WTC11 (cell line): ENCODE measurements at regions of chr7 and their contacts with region 1.

Region 1: DNA sequence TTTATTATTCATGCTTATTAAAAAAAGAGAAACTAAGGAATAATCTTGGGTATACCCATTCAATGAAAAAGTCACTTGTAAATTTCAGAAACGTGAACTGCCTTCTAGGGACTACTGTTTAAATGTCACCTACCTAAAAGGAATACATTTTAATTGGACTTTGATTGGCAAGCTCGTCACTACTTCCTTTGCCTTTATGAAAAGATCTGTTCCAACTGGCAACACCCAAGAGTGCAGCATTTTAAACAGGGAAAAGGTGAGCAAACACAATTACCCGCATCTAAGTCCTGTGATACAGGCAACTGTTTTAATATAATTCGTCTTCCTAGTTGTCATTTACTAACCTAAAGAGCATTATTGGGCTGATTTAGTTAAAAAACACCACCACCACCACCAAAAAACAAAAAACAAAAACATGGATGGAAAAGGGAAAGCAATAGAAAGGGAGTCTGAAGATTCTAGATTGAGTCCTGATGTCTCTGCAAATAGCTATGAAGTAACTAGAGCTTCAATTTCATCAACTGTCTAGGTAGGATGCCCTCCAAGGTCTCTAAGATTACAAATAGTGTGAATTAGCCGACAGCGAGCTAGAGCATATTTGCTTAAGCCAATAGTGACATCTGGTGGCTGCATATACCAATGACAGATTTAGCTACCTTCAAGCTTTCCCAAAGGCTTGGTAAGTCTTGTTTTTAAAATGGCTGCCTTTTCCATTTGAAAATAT is 33.8 kb upstream of the ICA1 start:
- DNase-seq: no peak
- ATAC-seq: peak; percentile 96
- H3K4me3 Mint-ChIP-seq: no peak overlapping the region
- H3K27ac Mint-ChIP-seq: no peak overlapping the region
- H3K4me1 Mint-ChIP-seq: peaks cover 31% of the 10 kb centered on the region
- H3K27me3 Mint-ChIP-seq: no peaks in the 10 kb centered on the region; the same call in 1 of the 2 replicates
- CTCF ChIP-seq: peak; percentile 70

Region 2: GRCh38 chr7:8214244-8214824 is 81.5 kb before region 1 on chr7:
- CTCF ChIA-PET with region 1: interaction called, 11 read pairs
- POLR2A ChIA-PET with region 1: no interaction called
- DNase-seq: no peak
- ATAC-seq: no peak
- H3K4me3 Mint-ChIP-seq: no peak overlapping the region
- H3K27ac Mint-ChIP-seq: no peak overlapping the region
- H3K4me1 Mint-ChIP-seq: peaks cover 57% of the 10 kb centered on the region
- H3K27me3 Mint-ChIP-seq: no peaks in the 10 kb centered on the region
- CTCF ChIP-seq: no peak

Region 3: DNA sequence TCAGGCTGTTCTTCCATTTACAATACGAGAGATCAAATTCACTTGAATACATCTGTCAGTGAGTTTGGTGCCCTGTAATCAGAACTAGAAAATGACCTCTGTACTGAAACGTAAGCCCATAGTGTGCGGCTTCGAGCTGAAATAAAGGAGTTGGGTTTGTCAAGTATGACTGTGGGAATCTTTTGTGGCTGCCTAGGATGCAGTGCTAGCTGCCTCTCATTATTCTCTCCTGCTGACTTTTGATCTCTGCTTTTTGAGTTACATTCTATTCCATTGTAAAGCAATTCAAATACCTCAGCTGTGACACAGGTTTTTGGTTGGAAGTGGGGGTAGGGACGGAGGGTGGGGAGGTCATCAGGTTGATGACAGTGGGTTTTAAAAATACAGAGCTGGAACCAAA is 74.2 kb before region 1 on chr7:
- CTCF ChIA-PET with region 1: interaction called, 11 read pairs
- POLR2A ChIA-PET with region 1: no interaction called
- DNase-seq: no peak
- ATAC-seq: peak; percentile 80
- H3K4me3 Mint-ChIP-seq: no peak overlapping the region; the same call in 1 of the 2 replicates
- H3K27ac Mint-ChIP-seq: peak overlapping the region; percentile 44; the same call in 1 of the 2 replicates
- H3K4me1 Mint-ChIP-seq: peaks cover 53% of the 10 kb centered on the region
- H3K27me3 Mint-ChIP-seq: no peaks in the 10 kb centered on the region
- CTCF ChIP-seq: no peak

Region 4: GRCh38 chr7:8277394-8277982 is 18.3 kb before region 1 on chr7:
- CTCF ChIA-PET with region 1: interaction called, 71 read pairs
- POLR2A ChIA-PET with region 1: no interaction called
- DNase-seq: no peak
- ATAC-seq: peak; percentile 92
- H3K4me3 Mint-ChIP-seq: no peak overlapping the region
- H3K27ac Mint-ChIP-seq: no peak overlapping the region
- H3K4me1 Mint-ChIP-seq: peaks cover 5% of the 10 kb centered on the region
- H3K27me3 Mint-ChIP-seq: no peaks in the 10 kb centered on the region
- CTCF ChIP-seq: 0 out of 2 replicates have a peak, but pooled peaks have one; percentile 30